B cell (primary cell): ENCODE measurements at regions of chr19 and their contacts with region 1.

Region 1: GRCh38 chr19:16062789-16063188 is 13.5 kb upstream of the TPM4 start:
- DNase-seq: peak; percentile 78
- ATAC-seq: peak; percentile 85
- H3K4me3 ChIP-seq: no peak overlapping the region
- H3K4me3 Mint-ChIP-seq: no peak overlapping the region
- H3K27ac ChIP-seq: no peak overlapping the region
- H3K27ac Mint-ChIP-seq: no peak overlapping the region
- H3K4me1 ChIP-seq: peaks cover 4 to 11% of the 10 kb centered on the region in 2 donors
- H3K4me1 Mint-ChIP-seq: peaks cover 12% of the 10 kb centered on the region
- H3K27me3 ChIP-seq: no peaks in the 10 kb centered on the region
- H3K27me3 Mint-ChIP-seq: peaks cover 3% of the 10 kb centered on the region
- CTCF ChIP-seq: peak; percentile 96

Region 2: GRCh38 chr19:16076154-16076957 is 13.6 kb after region 1 on chr19 and contains the start of gene TPM4:
- CTCF ChIA-PET with region 1: interaction called, 74 read pairs
- POLR2A ChIA-PET with region 1: interaction called, 4 read pairs
- intact Hi-C with region 1: no loop called
- DNase-seq: peak; percentile 93
- ATAC-seq: peak; percentile 60
- H3K4me3 ChIP-seq: peak within 1 kb of the TSS; percentile 56 to 86 (median 73)
- H3K4me3 Mint-ChIP-seq: peak within 1 kb of the TSS; percentile 88
- H3K27ac ChIP-seq: peak within 1 kb of the TSS; percentile 91 to 92
- H3K27ac Mint-ChIP-seq: peak within 1 kb of the TSS; percentile 94
- H3K4me1 ChIP-seq: peaks cover 35 to 56% of the 10 kb centered on the region in 2 donors
- H3K4me1 Mint-ChIP-seq: peaks cover 60% of the 10 kb centered on the region
- H3K27me3 ChIP-seq: no peaks in the 10 kb centered on the region
- H3K27me3 Mint-ChIP-seq: no peaks in the 10 kb centered on the region
- CTCF ChIP-seq: no peak
- total RNA-seq, gene TPM4: 127 TPM in 2 replicates

Region 3: GRCh38 chr19:16095071-16095571 is 32.3 kb after region 1 on chr19:
- CTCF ChIA-PET with region 1: interaction called, 57 read pairs
- POLR2A ChIA-PET with region 1: no interaction called
- intact Hi-C with region 1: no loop called
- DNase-seq: peak; percentile 40
- ATAC-seq: peak; percentile 43
- H3K4me3 ChIP-seq: no peak overlapping the region
- H3K4me3 Mint-ChIP-seq: no peak overlapping the region
- H3K27ac ChIP-seq: peak overlapping the region in 1 of 2 donors; percentile 11
- H3K27ac Mint-ChIP-seq: peak overlapping the region; percentile 69
- H3K4me1 ChIP-seq: peaks cover 7 to 10% of the 10 kb centered on the region in 2 donors
- H3K4me1 Mint-ChIP-seq: peaks cover 18% of the 10 kb centered on the region
- H3K27me3 ChIP-seq: no peaks in the 10 kb centered on the region
- H3K27me3 Mint-ChIP-seq: no peaks in the 10 kb centered on the region
- CTCF ChIP-seq: no peak

Region 4: GRCh38 chr19:16111160-16111908 is 48.5 kb after region 1 on chr19 and contains the start of gene RAB8A:
- CTCF ChIA-PET with region 1: interaction called, 28 read pairs
- POLR2A ChIA-PET with region 1: interaction called, 3 read pairs
- intact Hi-C with region 1: loop called (anchors 1 kb)
- DNase-seq: peak; percentile 100
- ATAC-seq: peak; percentile 88
- H3K4me3 ChIP-seq: peak within 1 kb of the TSS; percentile 50 to 99 (median 96)
- H3K4me3 Mint-ChIP-seq: peak within 1 kb of the TSS; percentile 96
- H3K27ac ChIP-seq: peak within 1 kb of the TSS; percentile 74 to 97
- H3K27ac Mint-ChIP-seq: peak within 1 kb of the TSS; percentile 95
- H3K4me1 ChIP-seq: peaks cover 29 to 53% of the 10 kb centered on the region in 2 donors
- H3K4me1 Mint-ChIP-seq: peaks cover 42% of the 10 kb centered on the region
- H3K27me3 ChIP-seq: no peaks in the 10 kb centered on the region
- H3K27me3 Mint-ChIP-seq: no peaks in the 10 kb centered on the region
- CTCF ChIP-seq: peak; percentile 91
- total RNA-seq, gene RAB8A: 115 and 117 TPM in 2 replicates

Region 5: GRCh38 chr19:16185123-16185767 is 122.5 kb after region 1 on chr19 and contains the start of gene FAM32A:
- CTCF ChIA-PET with region 1: interaction called, 45 read pairs
- POLR2A ChIA-PET with region 1: no interaction called
- intact Hi-C with region 1: loop called (anchors 1 kb)
- DNase-seq: peak; percentile 99
- ATAC-seq: peak; percentile 88
- H3K4me3 ChIP-seq: peak within 1 kb of the TSS; percentile 65 to 99 (median 71)
- H3K4me3 Mint-ChIP-seq: peak within 1 kb of the TSS; percentile 97
- H3K27ac ChIP-seq: peak within 1 kb of the TSS; percentile 60 to 83
- H3K27ac Mint-ChIP-seq: peak within 1 kb of the TSS; percentile 96
- H3K4me1 ChIP-seq: peaks cover 14 to 37% of the 10 kb centered on the region in 2 donors
- H3K4me1 Mint-ChIP-seq: peaks cover 33% of the 10 kb centered on the region
- H3K27me3 ChIP-seq: no peaks in the 10 kb centered on the region
- H3K27me3 Mint-ChIP-seq: no peaks in the 10 kb centered on the region
- CTCF ChIP-seq: no peak
- total RNA-seq, gene FAM32A: 53.4 TPM in 2 replicates